Transverse colon (tissue), 4 donors: ENCODE measurements at regions of chr13 and their contacts with region 1.

Region 1: DNA sequence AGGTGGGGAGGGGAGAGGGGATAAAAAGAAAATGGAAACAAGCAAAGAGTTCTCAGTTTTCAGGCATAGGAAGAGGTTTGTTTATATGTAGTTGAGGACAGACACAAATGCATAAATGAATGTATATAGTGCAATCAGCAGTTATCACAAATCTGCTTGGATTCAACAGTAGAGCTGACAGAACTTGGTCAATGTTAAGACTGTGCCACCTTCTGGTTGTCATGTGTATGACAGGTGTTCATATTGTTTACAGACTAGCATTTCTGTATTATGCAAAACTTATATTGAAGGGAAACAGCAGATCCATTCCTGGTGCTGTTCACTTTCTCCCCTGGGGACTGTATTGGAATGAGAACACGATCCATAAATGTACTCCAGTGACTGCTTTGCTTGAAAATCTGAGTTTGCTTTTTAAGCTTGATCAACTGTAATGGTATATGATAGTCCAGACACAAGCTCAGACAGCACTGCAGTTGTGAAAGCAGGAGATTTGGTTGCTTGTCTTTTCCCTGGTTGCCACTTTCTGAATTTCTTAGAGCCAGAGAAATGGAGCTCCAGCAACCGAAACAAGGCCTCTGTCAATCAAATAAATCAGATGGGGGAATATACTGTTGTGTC is 319.5 kb upstream of the OBI1 start:
- DNase-seq: peak; percentile 11
- H3K4me3 ChIP-seq: no peak overlapping the region
- H3K27ac ChIP-seq: no peak overlapping the region
- H3K4me1 ChIP-seq: no peaks in the 10 kb centered on the region
- H3K27me3 ChIP-seq: no peaks in the 10 kb centered on the region
- CTCF ChIP-seq: peak; percentile 46 to 69 (median 64)
- EP300 ChIP-seq: no peak
- POLR2A ChIP-seq: no peak

Region 2: DNA sequence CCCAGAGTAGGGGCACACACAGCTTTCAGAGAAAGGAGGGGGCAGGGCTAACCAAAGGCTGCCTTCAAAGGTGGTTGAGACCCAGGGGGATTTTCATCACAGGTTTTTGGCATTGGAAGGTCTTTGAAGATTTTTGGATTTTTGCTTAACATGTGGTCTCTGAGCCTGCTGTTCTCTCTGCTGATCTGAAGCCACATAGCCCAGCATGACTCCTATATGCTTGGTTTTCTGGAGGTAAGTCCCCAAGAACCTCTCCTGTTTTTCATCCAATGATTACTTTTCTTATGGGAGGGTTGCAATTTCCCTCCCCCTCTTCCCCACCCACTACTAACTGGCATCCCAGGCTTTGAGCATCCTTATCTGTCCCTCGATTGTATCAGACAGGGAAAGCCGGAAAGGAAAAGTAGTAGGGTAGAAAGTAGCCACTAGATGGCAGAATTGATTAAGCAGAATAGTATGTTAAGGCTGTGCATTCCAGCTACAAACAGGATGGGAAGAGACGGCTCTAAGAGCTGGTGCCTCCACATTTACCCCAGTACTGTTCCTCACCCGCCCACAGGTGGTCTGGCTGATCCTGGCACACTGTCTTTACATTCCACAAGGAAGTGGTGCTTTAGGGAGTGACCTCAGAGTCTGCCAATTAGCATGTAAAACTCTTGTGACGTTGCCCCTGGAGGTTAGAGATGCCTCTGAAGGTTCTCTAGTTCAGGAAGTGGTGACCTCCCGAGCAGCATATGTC is 840.9 kb before region 1 on chr13:
- in situ Hi-C with region 1: loop called (anchors 10 to 25 kb)
- intact Hi-C with region 1: loop called (anchors 2 kb)
- DNase-seq: no peak
- H3K4me3 ChIP-seq: no peak overlapping the region
- H3K27ac ChIP-seq: no peak overlapping the region
- H3K4me1 ChIP-seq: no peaks in the 10 kb centered on the region
- H3K27me3 ChIP-seq: no peaks in the 10 kb centered on the region
- CTCF ChIP-seq: peak; percentile 50 to 67 (median 57)
- EP300 ChIP-seq: no peak
- POLR2A ChIP-seq: no peak

Region 3: GRCh38 chr13:78147905-78148304 is 830.6 kb before region 1 on chr13:
- in situ Hi-C with region 1: loop called in 3 of 4 experiments (anchors 10 to 25 kb)
- intact Hi-C with region 1: no loop called
- DNase-seq: no peak
- H3K4me3 ChIP-seq: no peak overlapping the region
- H3K27ac ChIP-seq: no peak overlapping the region
- H3K4me1 ChIP-seq: no peaks in the 10 kb centered on the region
- H3K27me3 ChIP-seq: no peaks in the 10 kb centered on the region
- CTCF ChIP-seq: no peak
- EP300 ChIP-seq: no peak
- POLR2A ChIP-seq: no peak